ENCODE measurements at regions of chr9 and their contacts with region 1.

Region 1: GRCh38 chr9:87812375-87813118 is 70.1 kb upstream of the SPATA31E1 start:
- DNase-seq: peak; percentile 49
- H3K4me3 ChIP-seq: no peak overlapping the region
- H3K27ac ChIP-seq: no peak overlapping the region
- H3K4me1 ChIP-seq: no peaks in the 10 kb centered on the region
- H3K27me3 ChIP-seq: peaks cover 0 to 5% of the 10 kb centered on the region in 2 experiments
- CTCF ChIP-seq: peak; percentile 89 to 99
- POLR2A ChIP-seq: no peak

Region 2: GRCh38 chr9:87615547-87616148 is 196.9 kb before region 1 on chr9:
- CTCF ChIA-PET with region 1: no interaction called
- POLR2A ChIA-PET with region 1: no interaction called
- dilution Hi-C with region 1: no loop called
- intact Hi-C with region 1: no loop called
- DNase-seq: no peak
- H3K4me3 ChIP-seq: no peak overlapping the region
- H3K27ac ChIP-seq: no peak overlapping the region
- H3K4me1 ChIP-seq: no peaks in the 10 kb centered on the region
- H3K27me3 ChIP-seq: no peaks in the 10 kb centered on the region
- CTCF ChIP-seq: no peak
- POLR2A ChIP-seq: no peak

Region 3: DNA sequence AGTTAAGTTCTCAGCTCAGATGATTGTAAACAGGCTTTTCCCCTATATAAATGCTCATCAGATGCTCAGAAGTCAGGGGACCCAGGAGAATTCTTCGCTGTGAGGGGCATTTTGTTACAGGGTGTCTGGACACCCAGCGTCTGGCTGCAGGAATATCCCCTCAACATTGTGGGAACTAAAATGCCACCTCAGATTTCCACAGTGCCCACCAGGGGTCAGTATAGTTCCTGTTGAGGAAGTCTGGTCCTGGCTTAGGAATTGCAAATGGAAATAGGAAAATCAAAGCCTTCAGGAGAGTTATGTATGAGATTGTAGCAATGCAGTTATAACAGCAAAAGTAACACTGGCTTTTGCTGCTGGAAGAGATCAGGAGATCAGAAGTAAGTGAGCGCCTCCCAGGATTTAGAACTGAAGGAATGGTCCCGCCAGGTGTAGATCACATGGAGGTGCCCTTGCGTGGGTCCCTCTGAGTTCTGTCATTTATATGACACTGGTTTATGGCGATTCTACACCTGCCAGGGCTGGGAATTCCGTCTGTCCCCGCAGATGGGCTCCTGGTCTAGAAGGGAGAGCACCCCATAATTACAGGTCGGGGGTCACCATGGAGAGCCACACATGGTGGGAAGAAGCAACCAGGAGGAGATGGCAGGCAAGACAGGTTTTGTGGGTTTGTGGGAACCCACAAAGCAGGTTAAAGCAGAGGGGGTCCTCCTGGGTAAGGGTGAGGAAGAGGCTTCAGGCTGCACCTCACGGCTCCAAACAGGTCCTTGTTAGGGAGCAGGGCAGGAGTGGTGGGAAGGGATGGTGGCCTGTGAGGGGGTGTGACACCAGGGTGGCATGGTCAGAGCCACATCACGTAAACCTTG is 133.7 kb before region 1 on chr9:
- CTCF ChIA-PET with region 1: interaction called, 113 read pairs
- POLR2A ChIA-PET with region 1: no interaction called
- dilution Hi-C with region 1: no loop called
- intact Hi-C with region 1: loop called (anchors 1 kb)
- DNase-seq: peak; percentile 57
- H3K4me3 ChIP-seq: no peak overlapping the region
- H3K27ac ChIP-seq: no peak overlapping the region
- H3K4me1 ChIP-seq: no peaks in the 10 kb centered on the region
- H3K27me3 ChIP-seq: no peaks in the 10 kb centered on the region
- CTCF ChIP-seq: peak; percentile 69 to 76
- POLR2A ChIP-seq: no peak

Region 4: DNA sequence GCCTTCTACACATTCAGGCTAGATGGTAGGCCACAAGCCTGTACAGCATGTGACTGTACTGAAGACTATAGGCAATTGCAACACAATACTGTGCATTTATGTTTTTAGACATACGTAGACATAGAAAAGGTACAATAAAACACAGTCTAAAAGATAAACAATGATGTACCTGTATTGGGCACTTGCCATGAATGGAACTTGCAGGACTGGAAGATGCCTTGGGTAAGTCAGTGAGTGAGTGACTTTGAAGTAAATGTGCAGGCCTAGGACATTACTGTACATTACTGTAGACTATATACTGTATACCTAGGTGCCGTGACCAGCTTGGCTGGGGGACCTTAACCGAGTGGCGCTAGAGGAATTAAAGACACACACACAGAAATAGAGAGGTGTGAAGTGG is 33.6 kb before region 1 on chr9:
- CTCF ChIA-PET with region 1: no interaction called
- POLR2A ChIA-PET with region 1: no interaction called
- dilution Hi-C with region 1: no loop called
- intact Hi-C with region 1: no loop called
- DNase-seq: no peak
- H3K4me3 ChIP-seq: no peak overlapping the region
- H3K27ac ChIP-seq: no peak overlapping the region
- H3K4me1 ChIP-seq: no peaks in the 10 kb centered on the region
- H3K27me3 ChIP-seq: peaks cover 0 to 1% of the 10 kb centered on the region in 2 experiments
- CTCF ChIP-seq: no peak
- POLR2A ChIP-seq: no peak

Region 5: GRCh38 chr9:87792831-87793288 is 19.7 kb before region 1 on chr9:
- CTCF ChIA-PET with region 1: interaction called, 10 read pairs
- POLR2A ChIA-PET with region 1: no interaction called
- dilution Hi-C with region 1: no loop called
- intact Hi-C with region 1: no loop called
- DNase-seq: peak; percentile 56
- H3K4me3 ChIP-seq: no peak overlapping the region
- H3K27ac ChIP-seq: no peak overlapping the region
- H3K4me1 ChIP-seq: peaks cover 4% of the 10 kb centered on the region
- H3K27me3 ChIP-seq: no peaks in the 10 kb centered on the region
- CTCF ChIP-seq: peak in 1 of 2 donors; percentile 7
- POLR2A ChIP-seq: peak; percentile 17

Region 6: DNA sequence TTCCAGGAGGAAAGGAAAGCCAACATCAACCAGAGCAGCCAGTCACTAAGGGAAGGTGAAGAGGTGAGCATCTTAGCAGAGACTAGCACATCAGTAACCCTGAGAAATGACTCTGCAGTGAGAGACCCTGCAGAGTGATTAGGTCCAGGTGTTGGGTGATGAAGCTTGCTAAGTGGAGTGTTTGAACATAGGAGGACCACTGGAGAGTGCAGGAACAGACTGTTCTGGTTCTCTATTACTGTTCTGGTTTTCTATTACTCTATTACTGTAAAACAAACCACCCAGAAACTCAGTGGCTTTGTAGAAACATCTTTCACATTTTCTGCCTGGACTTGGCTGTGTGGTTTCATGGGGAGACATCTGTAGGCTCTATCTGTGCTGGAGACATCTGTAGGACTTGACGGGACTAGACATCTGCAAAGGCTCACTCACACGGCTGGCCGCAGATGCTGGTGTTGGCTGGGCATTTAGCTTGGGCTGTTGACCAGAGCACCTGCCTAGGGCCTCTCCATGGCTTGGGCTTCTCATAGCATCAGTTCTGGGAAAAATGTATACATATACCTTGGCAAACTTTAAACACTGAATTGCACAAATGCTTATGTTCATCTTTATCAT is 36.7 kb after region 1 on chr9:
- CTCF ChIA-PET with region 1: no interaction called
- POLR2A ChIA-PET with region 1: no interaction called
- dilution Hi-C with region 1: no loop called
- intact Hi-C with region 1: no loop called
- DNase-seq: no peak
- H3K4me3 ChIP-seq: no peak overlapping the region
- H3K27ac ChIP-seq: no peak overlapping the region
- H3K4me1 ChIP-seq: no peaks in the 10 kb centered on the region
- H3K27me3 ChIP-seq: peaks cover 0 to 2% of the 10 kb centered on the region in 2 experiments
- CTCF ChIP-seq: no peak
- POLR2A ChIP-seq: no peak

Region 7: GRCh38 chr9:88060736-88061135 is 248.2 kb after region 1 on chr9:
- CTCF ChIA-PET with region 1: no interaction called
- POLR2A ChIA-PET with region 1: no interaction called
- dilution Hi-C with region 1: no loop called
- intact Hi-C with region 1: no loop called
- DNase-seq: no peak
- H3K4me3 ChIP-seq: no peak overlapping the region
- H3K27ac ChIP-seq: no peak overlapping the region
- H3K4me1 ChIP-seq: no peaks in the 10 kb centered on the region
- H3K27me3 ChIP-seq: no peaks in the 10 kb centered on the region
- CTCF ChIP-seq: no peak
- POLR2A ChIP-seq: no peak

Measured in endothelial cell of umbilical vein (primary cell).